Naive thymus-derived CD4-positive, alpha-beta T cell (primary cell): ENCODE measurements at regions of chr3 and their contacts with region 1.

Region 1: GRCh38 chr3:139378587-139379241 is 10.7 kb downstream of the COPB2 start:
- DNase-seq: no peak
- ATAC-seq: no peak
- H3K4me3 ChIP-seq: no peak overlapping the region
- H3K4me3 Mint-ChIP-seq: no peak overlapping the region
- H3K27ac ChIP-seq: no peak overlapping the region
- H3K27ac Mint-ChIP-seq: peak overlapping the region in 2 of 9 donors; percentile 45 to 49
- H3K4me1 ChIP-seq: no peaks in the 10 kb centered on the region
- H3K4me1 Mint-ChIP-seq: peaks cover 8 to 50% (median 32%) of the 10 kb centered on the region in 7 donors
- H3K27me3 ChIP-seq: no peaks in the 10 kb centered on the region
- H3K27me3 Mint-ChIP-seq: no peaks in the 10 kb centered on the region

Region 2: GRCh38 chr3:139358841-139359562 is 19.7 kb before region 1 on chr3:
- CTCF ChIA-PET with region 1: no interaction called
- POLR2A ChIA-PET with region 1: no interaction called
- intact Hi-C with region 1: loop called in 1 of 2 experiments (anchors 2 kb)
- DNase-seq: no peak
- ATAC-seq: no peak
- H3K4me3 ChIP-seq: no peak overlapping the region
- H3K4me3 Mint-ChIP-seq: no peak overlapping the region
- H3K27ac ChIP-seq: no peak overlapping the region
- H3K27ac Mint-ChIP-seq: peak overlapping the region in 1 of 9 donors; percentile 10
- H3K4me1 ChIP-seq: no peaks in the 10 kb centered on the region
- H3K4me1 Mint-ChIP-seq: peaks cover 0 to 22% (median 6%) of the 10 kb centered on the region in 7 donors
- H3K27me3 ChIP-seq: no peaks in the 10 kb centered on the region
- H3K27me3 Mint-ChIP-seq: no peaks in the 10 kb centered on the region